Mammary epithelial cell (primary cell): ENCODE measurements at regions of chr12 and their contacts with region 1.

Region 1: GRCh38 chr12:15789220-15790171 is at the start of gene EPS8:
- DNase-seq: peak; percentile 91
- H3K4me3 ChIP-seq: peak within 1 kb of the TSS; percentile 79 to 92 (median 90)
- H3K27ac ChIP-seq: peak within 1 kb of the TSS; percentile 67
- H3K4me1 ChIP-seq: peaks cover 14% of the 10 kb centered on the region
- H3K27me3 ChIP-seq: no peaks in the 10 kb centered on the region
- CTCF ChIP-seq: peak in 1 of 2 donors; percentile 21
- total RNA-seq, gene EPS8: 28.9 to 51.7 TPM

Region 2: GRCh38 chr12:15590180-15590826 is 199.2 kb before region 1 on chr12:
- CTCF ChIA-PET with region 1: no interaction called
- dilution Hi-C with region 1: no loop called
- in situ Hi-C with region 1: no loop called
- intact Hi-C with region 1: loop called (anchors 1 kb)
- DNase-seq: peak; percentile 73
- H3K4me3 ChIP-seq: peak overlapping the region; percentile 51 to 54 (median 52)
- H3K27ac ChIP-seq: peak overlapping the region; percentile 6
- H3K4me1 ChIP-seq: peaks cover 5% of the 10 kb centered on the region
- H3K27me3 ChIP-seq: no peaks in the 10 kb centered on the region
- CTCF ChIP-seq: peak; percentile 78 to 90

Region 3: DNA sequence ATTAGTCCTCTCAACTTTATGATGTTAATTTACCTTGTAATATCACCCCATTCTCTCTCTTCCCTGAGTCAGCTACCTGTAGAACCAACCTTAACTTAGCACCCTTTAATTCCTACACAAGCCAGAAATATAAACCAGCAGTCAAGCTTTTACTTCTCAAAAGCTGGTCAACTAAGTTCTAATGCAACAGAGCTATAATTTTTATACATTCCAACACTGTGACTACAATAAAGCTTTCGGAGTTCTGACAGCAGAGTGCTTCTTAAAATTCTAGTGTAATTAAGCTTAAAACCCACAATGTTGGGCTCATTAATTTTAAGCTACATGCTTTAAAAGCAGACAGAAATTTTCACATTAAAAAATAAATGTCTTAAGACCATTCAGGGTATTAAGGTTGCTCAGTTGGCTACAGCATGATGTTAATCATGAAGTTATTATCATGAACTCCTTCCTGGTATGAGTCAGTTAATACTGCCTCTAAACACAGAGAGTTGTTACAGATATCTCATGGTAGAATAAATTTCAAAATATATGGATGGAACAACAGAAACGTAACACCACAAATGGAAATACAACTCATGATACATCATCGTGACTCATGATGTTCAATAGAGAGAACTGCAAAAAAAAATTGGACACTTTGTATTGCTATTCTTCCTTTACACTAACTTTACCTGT is 127.1 kb before region 1 on chr12:
- CTCF ChIA-PET with region 1: no interaction called
- dilution Hi-C with region 1: no loop called
- in situ Hi-C with region 1: no loop called
- intact Hi-C with region 1: loop called (anchors 5 kb)
- DNase-seq: peak; percentile 93
- H3K4me3 ChIP-seq: peak overlapping the region in 1 of 3 experiments; percentile 24
- H3K27ac ChIP-seq: peak overlapping the region; percentile 90
- H3K4me1 ChIP-seq: peaks cover 14% of the 10 kb centered on the region
- H3K27me3 ChIP-seq: no peaks in the 10 kb centered on the region
- CTCF ChIP-seq: no peak

Region 4: DNA sequence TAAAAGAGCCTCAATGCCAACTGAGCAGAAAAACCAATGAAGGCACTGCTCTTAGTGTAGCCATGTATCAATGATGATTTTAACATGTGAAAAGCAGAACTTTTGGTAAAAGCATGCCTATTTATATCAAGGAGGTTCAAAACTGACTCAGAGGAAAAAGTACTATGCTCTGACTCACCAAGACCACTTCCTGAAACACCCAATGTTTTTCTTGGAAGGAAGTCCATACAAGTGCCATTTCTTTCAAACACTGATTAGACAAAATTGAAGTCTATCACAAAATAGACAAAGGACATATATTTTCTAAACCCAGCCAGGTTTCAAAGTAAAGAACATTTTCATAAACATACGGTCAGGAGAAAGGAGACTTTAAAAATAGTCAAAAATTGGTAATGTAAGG is 88.9 kb before region 1 on chr12:
- CTCF ChIA-PET with region 1: no interaction called
- dilution Hi-C with region 1: no loop called
- in situ Hi-C with region 1: no loop called
- intact Hi-C with region 1: loop called (anchors 2 kb)
- DNase-seq: peak; percentile 83
- H3K4me3 ChIP-seq: no peak overlapping the region
- H3K27ac ChIP-seq: peak overlapping the region; percentile 85
- H3K4me1 ChIP-seq: peaks cover 26% of the 10 kb centered on the region
- H3K27me3 ChIP-seq: no peaks in the 10 kb centered on the region
- CTCF ChIP-seq: no peak

Region 5: GRCh38 chr12:15757553-15758265 is 31.8 kb before region 1 on chr12:
- CTCF ChIA-PET with region 1: no interaction called
- dilution Hi-C with region 1: no loop called
- in situ Hi-C with region 1: no loop called
- intact Hi-C with region 1: loop called (anchors 2 kb)
- DNase-seq: peak; percentile 91
- H3K4me3 ChIP-seq: no peak overlapping the region
- H3K27ac ChIP-seq: peak overlapping the region; percentile 68
- H3K4me1 ChIP-seq: peaks cover 17% of the 10 kb centered on the region
- H3K27me3 ChIP-seq: no peaks in the 10 kb centered on the region
- CTCF ChIP-seq: no peak

Region 6: DNA sequence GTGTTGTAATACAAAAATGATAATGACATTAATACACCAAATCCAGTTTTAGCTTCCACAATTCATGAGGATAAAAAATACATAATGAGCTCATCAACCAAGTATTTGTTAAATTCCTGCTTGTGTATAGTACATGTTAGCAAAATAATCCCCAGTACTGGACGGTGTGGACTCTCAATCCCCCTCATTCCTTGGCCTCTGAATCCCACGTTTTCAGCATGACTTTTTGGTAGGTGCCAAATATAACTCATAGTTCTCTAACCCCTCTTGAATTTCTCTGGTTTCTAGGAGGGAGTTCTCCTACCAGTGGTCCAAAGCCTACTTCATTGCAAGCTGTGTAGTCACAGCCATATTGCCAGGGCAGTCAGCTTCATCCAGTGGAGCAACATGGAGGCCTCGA is 41.0 kb after region 1 on chr12:
- CTCF ChIA-PET with region 1: no interaction called
- dilution Hi-C with region 1: no loop called
- in situ Hi-C with region 1: no loop called
- intact Hi-C with region 1: loop called (anchors 5 kb)
- DNase-seq: no peak
- H3K4me3 ChIP-seq: no peak overlapping the region
- H3K27ac ChIP-seq: no peak overlapping the region
- H3K4me1 ChIP-seq: peaks cover 20% of the 10 kb centered on the region
- H3K27me3 ChIP-seq: no peaks in the 10 kb centered on the region
- CTCF ChIP-seq: no peak

Region 7: DNA sequence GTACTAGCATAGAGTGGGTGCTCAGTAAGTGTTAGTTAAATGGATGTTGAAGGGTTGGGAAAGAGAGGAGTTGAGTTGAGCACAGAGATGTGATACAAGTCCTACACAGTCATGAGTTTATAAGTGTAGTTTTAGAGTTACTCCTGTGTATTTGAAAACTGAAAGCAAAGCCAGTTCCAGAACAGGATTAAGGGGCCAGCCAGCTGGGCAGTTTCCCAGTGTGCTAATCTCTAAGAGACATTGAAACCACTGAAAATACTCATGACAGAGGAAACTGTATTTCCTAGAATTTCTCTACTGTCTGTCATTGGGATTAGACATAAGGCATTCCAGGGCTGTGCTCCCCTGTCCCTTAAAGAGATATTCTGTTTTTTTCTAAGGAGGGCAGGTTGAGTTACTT is 222.6 kb after region 1 on chr12:
- CTCF ChIA-PET with region 1: no interaction called
- dilution Hi-C with region 1: no loop called
- in situ Hi-C with region 1: no loop called
- intact Hi-C with region 1: no loop called
- DNase-seq: no peak
- H3K4me3 ChIP-seq: no peak overlapping the region
- H3K27ac ChIP-seq: no peak overlapping the region
- H3K4me1 ChIP-seq: no peaks in the 10 kb centered on the region
- H3K27me3 ChIP-seq: no peaks in the 10 kb centered on the region
- CTCF ChIP-seq: no peak